GM12878 (cell line): ENCODE measurements at regions of chr2 and their contacts with region 1.

Region 1: GRCh38 chr2:198053776-198054698 is 249.6 kb downstream of the PLCL1 start:
- DNase-seq: no peak
- ATAC-seq: peak; percentile 97
- H3K4me3 ChIP-seq: no peak overlapping the region
- H3K27ac ChIP-seq: no peak overlapping the region
- H3K4me1 ChIP-seq: no peaks in the 10 kb centered on the region
- H3K27me3 ChIP-seq: no peaks in the 10 kb centered on the region
- CTCF ChIP-seq: peak; percentile 47 to 65 (median 59)
- EP300 ChIP-seq: no peak
- POLR2A ChIP-seq: no peak
- RAD21 ChIP-seq: peak; percentile 80

Region 2: GRCh38 chr2:197804049-197804757 is 249.8 kb before region 1 on chr2 and contains the start of gene PLCL1:
- CTCF ChIA-PET with region 1: interaction called, 9 read pairs
- POLR2A ChIA-PET with region 1: interaction called, 3 read pairs
- RAD21 ChIA-PET with region 1: no interaction called
- SMC1A ChIA-PET with region 1: interaction called, 9 read pairs
- in situ Hi-C with region 1: no loop called
- intact Hi-C with region 1: loop called (anchors 1 kb)
- DNase-seq: peak; percentile 40
- ATAC-seq: peak; percentile 99
- H3K4me3 ChIP-seq: peak within 1 kb of the TSS; percentile 62
- H3K27ac ChIP-seq: no peak within 1 kb of the TSS
- H3K4me1 ChIP-seq: no peaks in the 10 kb centered on the region
- H3K27me3 ChIP-seq: peaks cover 4 to 19% of the 10 kb centered on the region in 2 experiments
- CTCF ChIP-seq: 0 out of 6 replicates have a peak, but pooled peaks of 1 of the 3 experiments have one; percentile 2
- EP300 ChIP-seq: no peak
- POLR2A ChIP-seq: no peak
- RAD21 ChIP-seq: no peak
- polyA plus RNA-seq, gene PLCL1: 0.03 to 0.05 TPM

Region 3: GRCh38 chr2:198042189-198042588 is 11.8 kb before region 1 on chr2:
- CTCF ChIA-PET with region 1: interaction called, 15 read pairs
- POLR2A ChIA-PET with region 1: interaction called, 8 read pairs
- RAD21 ChIA-PET with region 1: interaction called, 4 read pairs
- SMC1A ChIA-PET with region 1: interaction called, 17 read pairs
- in situ Hi-C with region 1: no loop called
- intact Hi-C with region 1: no loop called
- DNase-seq: no peak
- ATAC-seq: peak; percentile 71
- H3K4me3 ChIP-seq: no peak overlapping the region
- H3K27ac ChIP-seq: peak overlapping the region; percentile 14; the same call in 1 of the 2 replicates
- H3K4me1 ChIP-seq: no peaks in the 10 kb centered on the region
- H3K27me3 ChIP-seq: no peaks in the 10 kb centered on the region
- CTCF ChIP-seq: no peak
- EP300 ChIP-seq: peak in 1 of 2 experiments; percentile 35; a peak in 1 of 4 replicates
- POLR2A ChIP-seq: no peak
- RAD21 ChIP-seq: no peak